ENCODE measurements at regions of chr3 and their contacts with region 1.

Region 1: GRCh38 chr3:53072653-53073552 is 27.0 kb upstream of the SFMBT1 start:
- DNase-seq: peak; percentile 43
- ATAC-seq: peak; percentile 97
- H3K4me3 ChIP-seq: peak overlapping the region; percentile 85
- H3K27ac ChIP-seq: peak overlapping the region; percentile 51
- H3K4me1 ChIP-seq: peaks cover 9% of the 10 kb centered on the region
- H3K27me3 ChIP-seq: no peaks in the 10 kb centered on the region
- CTCF ChIP-seq: peak; percentile 95 to 96 (median 95); a peak in 5 of 6 replicates
- EP300 ChIP-seq: no peak
- POLR2A ChIP-seq: no peak
- RAD21 ChIP-seq: peak; percentile 86

Region 2: GRCh38 chr3:52845691-52846431 is 227.0 kb before region 1 on chr3:
- CTCF ChIA-PET with region 1: interaction called, 11 read pairs
- POLR2A ChIA-PET with region 1: no interaction called
- RAD21 ChIA-PET with region 1: no interaction called
- SMC1A ChIA-PET with region 1: interaction called, 4 read pairs
- in situ Hi-C with region 1: loop called (anchors 10 kb)
- intact Hi-C with region 1: loop called (anchors 1 kb)
- DNase-seq: no peak
- ATAC-seq: peak; percentile 74
- H3K4me3 ChIP-seq: no peak overlapping the region
- H3K27ac ChIP-seq: no peak overlapping the region
- H3K4me1 ChIP-seq: peaks cover 8% of the 10 kb centered on the region
- H3K27me3 ChIP-seq: no peaks in the 10 kb centered on the region
- CTCF ChIP-seq: peak; percentile 24 to 62 (median 43); a peak in 5 of 6 replicates
- EP300 ChIP-seq: no peak
- POLR2A ChIP-seq: no peak
- RAD21 ChIP-seq: 0 out of 2 replicates have a peak, but pooled peaks have one; percentile 15

Region 3: DNA sequence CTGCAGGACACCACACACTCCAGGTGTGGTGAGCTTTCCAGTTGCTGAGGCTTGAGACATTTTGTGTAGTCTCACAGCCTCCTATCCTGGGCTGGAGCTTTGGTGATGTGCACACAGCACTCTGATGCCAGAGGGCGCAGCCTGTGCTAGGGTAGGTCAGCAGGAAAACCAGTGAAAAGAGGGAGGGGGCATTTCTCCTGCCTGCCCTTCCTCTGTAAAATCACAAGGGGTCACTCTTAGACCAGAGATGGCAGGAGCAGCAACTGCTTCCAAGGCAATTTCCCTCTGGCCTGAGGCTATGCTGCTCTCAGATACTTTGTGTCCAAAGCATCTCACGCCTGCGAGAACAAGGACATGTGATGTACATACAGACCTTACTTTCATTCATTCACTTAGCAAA is 221.6 kb before region 1 on chr3:
- CTCF ChIA-PET with region 1: interaction called, 11 read pairs
- POLR2A ChIA-PET with region 1: no interaction called
- RAD21 ChIA-PET with region 1: no interaction called
- SMC1A ChIA-PET with region 1: interaction called, 4 read pairs
- in situ Hi-C with region 1: loop called (anchors 10 kb)
- intact Hi-C with region 1: loop called (anchors 1 kb)
- DNase-seq: no peak
- ATAC-seq: peak; percentile 78
- H3K4me3 ChIP-seq: no peak overlapping the region
- H3K27ac ChIP-seq: no peak overlapping the region
- H3K4me1 ChIP-seq: peaks cover 3% of the 10 kb centered on the region
- H3K27me3 ChIP-seq: no peaks in the 10 kb centered on the region
- CTCF ChIP-seq: peak; percentile 65 to 83 (median 71)
- EP300 ChIP-seq: no peak
- POLR2A ChIP-seq: no peak
- RAD21 ChIP-seq: peak; percentile 93